ENCODE measurements at regions of chr13 and their contacts with region 1.

Region 1: DNA sequence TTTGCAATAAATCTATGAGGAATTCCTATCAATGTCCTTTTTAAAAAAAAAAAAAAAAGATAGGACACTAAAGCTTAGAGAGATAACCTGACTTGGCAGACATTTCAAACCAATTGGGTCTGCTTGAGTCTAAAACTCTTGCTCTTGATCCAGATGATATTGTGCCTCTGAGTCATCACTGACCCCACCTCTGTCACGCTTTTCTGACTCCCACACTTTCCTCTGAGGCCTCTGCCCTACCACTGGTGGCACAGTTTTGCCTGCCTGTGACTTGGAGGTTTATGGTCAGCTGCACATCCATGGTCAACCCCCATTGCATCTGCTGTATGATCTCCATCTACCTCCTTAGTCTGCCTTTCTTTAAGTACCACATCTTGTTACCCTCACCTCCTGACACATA is 328.7 kb downstream of the SPRY2 start:
- DNase-seq: no peak
- ATAC-seq: no peak

Region 2: GRCh38 chr13:79775830-79776229 is 236.4 kb before region 1 on chr13:
- intact Hi-C with region 1: loop called (anchors 10 kb)
- DNase-seq: no peak
- ATAC-seq: no peak

Region 3: DNA sequence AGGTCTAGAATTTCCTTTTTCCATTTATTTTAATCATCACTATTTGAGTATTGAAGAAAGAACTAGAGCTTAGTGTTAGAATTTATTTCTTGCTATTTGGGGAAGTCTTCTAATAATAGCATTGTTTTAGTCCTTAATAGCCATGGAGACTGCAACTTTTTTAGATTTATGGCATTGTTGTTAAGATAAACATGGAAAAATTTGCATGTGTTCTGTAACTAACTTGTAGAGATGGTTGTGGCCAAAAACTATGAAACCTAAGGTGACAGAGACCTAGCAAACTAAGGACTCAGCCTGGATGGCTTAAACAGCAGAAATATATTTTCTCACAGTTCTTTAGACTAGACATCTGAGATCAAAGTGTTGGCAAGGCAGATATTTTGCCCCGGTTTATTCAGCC is 82.3 kb after region 1 on chr13:
- intact Hi-C with region 1: no loop called
- DNase-seq: no peak
- ATAC-seq: no peak

Measured in Right ventricle myocardium inferior (tissue), 1 donor.